Naive thymus-derived CD4-positive, alpha-beta T cell (primary cell): ENCODE measurements at regions of chr19 and their contacts with region 1.

Region 1: DNA sequence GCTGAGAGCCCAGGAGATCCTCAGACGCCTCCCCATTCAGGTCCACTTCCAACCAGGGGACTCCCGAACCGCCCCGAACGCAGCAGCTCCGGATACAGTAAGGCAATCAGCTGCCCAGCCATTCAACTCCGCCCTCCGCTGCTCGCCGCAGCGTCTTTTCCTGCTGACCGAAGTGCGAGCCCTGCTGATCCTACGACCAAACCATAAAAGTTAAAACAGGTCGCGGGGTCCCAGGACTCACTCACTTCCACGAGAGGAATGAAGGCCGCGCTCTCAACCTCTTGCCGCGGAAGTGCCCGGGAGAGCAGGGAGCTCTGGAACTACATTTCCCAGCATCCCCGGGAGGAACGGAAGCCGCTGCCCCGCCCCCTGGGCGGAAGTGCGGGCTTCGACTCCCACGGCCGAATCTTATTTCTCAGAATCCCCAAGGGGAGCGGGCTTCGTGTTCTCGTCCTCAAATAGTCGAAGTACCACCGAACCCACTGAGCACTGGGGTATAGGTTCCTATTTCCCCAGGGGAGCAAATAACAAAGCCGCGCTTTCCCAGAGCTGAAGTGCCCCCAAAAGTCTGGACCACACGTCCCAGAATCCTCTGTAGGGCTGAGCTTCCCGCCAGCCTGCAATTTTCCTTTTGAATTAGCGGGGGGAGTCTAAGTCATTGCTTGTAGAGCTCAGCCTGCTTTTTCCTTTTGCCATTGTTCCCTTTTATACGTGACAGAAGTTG is at the start of gene ZNF45:
- DNase-seq: peak; percentile 65 to 89 (median 86)
- ATAC-seq: peak; percentile 98
- H3K4me3 ChIP-seq: peak within 1 kb of the TSS; percentile 84
- H3K4me3 Mint-ChIP-seq: peak within 1 kb of the TSS; percentile 93 to 98 (median 96)
- H3K27ac ChIP-seq: peak within 1 kb of the TSS; percentile 81
- H3K27ac Mint-ChIP-seq: peak within 1 kb of the TSS; percentile 81 to 96 (median 93)
- H3K4me1 ChIP-seq: peaks cover 16 to 17% of the 10 kb centered on the region in 2 donors
- H3K4me1 Mint-ChIP-seq: peaks cover 10 to 46% (median 32%) of the 10 kb centered on the region in 7 donors
- H3K27me3 ChIP-seq: no peaks in the 10 kb centered on the region
- H3K27me3 Mint-ChIP-seq: peaks cover 0 to 7% (median 0%) of the 10 kb centered on the region in 5 donors
- total RNA-seq, gene ZNF45: 8.4 to 28.5 (median 15.3) TPM

Region 2: GRCh38 chr19:43901395-43902390 is 33.5 kb before region 1 on chr19:
- CTCF ChIA-PET with region 1: no interaction called
- POLR2A ChIA-PET with region 1: interaction called, 4 read pairs
- intact Hi-C with region 1: loop called (anchors 1 kb)
- DNase-seq: peak; percentile 21 to 56 (median 48)
- ATAC-seq: peak; percentile 87
- H3K4me3 ChIP-seq: peak overlapping the region; percentile 63
- H3K4me3 Mint-ChIP-seq: peak overlapping the region; percentile 89 to 97 (median 92)
- H3K27ac ChIP-seq: peak overlapping the region; percentile 27
- H3K27ac Mint-ChIP-seq: peak overlapping the region; percentile 66 to 86 (median 79)
- H3K4me1 ChIP-seq: peaks cover 0 to 7% of the 10 kb centered on the region in 2 donors
- H3K4me1 Mint-ChIP-seq: peaks cover 15 to 29% (median 21%) of the 10 kb centered on the region in 7 donors
- H3K27me3 ChIP-seq: no peaks in the 10 kb centered on the region
- H3K27me3 Mint-ChIP-seq: no peaks in the 10 kb centered on the region

Region 3: DNA sequence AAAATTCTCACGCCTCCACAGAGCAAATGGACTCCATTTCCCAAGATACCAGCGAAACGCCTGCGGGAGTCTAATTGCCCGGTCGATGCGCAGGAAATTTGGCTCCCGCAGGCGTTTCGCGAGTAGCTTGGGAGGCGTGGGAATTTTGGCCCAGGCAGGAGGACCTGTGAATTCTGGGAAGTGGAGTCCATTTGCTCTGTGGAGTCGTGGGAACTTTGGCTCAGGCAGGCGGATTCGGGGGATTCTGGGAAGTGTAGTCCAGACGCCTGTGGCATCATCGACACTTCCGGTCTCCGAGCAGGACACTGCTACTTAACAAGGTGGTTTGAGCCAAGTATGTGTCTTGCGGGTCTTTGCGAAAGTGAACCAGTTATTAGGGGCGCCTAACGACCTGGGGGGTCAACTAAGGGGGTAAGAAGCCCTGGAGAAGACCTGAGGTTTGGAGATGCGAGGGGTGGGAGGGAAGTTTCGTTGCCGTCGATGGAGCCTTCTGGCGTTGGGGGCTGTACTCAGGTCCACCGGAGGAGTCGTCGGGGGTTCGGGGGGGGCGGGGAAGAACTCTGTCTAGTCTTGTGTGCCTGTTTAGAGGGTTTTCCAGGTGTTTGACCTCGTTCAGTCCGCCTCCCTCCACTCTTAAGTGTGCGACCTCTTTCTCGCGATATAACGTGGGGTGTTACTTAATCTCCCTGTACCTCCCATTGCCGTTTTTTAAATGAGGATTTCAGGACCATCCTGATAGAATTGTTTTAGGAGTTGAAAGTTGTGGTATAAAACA is 49.0 kb after region 1 on chr19 and contains the start of gene ZNF155:
- CTCF ChIA-PET with region 1: interaction called, 4 read pairs
- POLR2A ChIA-PET with region 1: no interaction called
- intact Hi-C with region 1: loop called (anchors 1 kb)
- DNase-seq: peak; percentile 46 to 72 (median 64)
- ATAC-seq: peak; percentile 92
- H3K4me3 ChIP-seq: peak within 1 kb of the TSS; percentile 96
- H3K4me3 Mint-ChIP-seq: peak within 1 kb of the TSS; percentile 89 to 99 (median 96)
- H3K27ac ChIP-seq: peak within 1 kb of the TSS; percentile 79
- H3K27ac Mint-ChIP-seq: peak within 1 kb of the TSS; percentile 72 to 97 (median 93)
- H3K4me1 ChIP-seq: peaks cover 0 to 3% of the 10 kb centered on the region in 2 donors
- H3K4me1 Mint-ChIP-seq: peaks cover 0 to 28% (median 14%) of the 10 kb centered on the region in 7 donors
- H3K27me3 ChIP-seq: no peaks in the 10 kb centered on the region
- H3K27me3 Mint-ChIP-seq: no peaks in the 10 kb centered on the region
- total RNA-seq, gene ZNF155: 5.2 to 13.3 (median 9.1) TPM

Region 4: DNA sequence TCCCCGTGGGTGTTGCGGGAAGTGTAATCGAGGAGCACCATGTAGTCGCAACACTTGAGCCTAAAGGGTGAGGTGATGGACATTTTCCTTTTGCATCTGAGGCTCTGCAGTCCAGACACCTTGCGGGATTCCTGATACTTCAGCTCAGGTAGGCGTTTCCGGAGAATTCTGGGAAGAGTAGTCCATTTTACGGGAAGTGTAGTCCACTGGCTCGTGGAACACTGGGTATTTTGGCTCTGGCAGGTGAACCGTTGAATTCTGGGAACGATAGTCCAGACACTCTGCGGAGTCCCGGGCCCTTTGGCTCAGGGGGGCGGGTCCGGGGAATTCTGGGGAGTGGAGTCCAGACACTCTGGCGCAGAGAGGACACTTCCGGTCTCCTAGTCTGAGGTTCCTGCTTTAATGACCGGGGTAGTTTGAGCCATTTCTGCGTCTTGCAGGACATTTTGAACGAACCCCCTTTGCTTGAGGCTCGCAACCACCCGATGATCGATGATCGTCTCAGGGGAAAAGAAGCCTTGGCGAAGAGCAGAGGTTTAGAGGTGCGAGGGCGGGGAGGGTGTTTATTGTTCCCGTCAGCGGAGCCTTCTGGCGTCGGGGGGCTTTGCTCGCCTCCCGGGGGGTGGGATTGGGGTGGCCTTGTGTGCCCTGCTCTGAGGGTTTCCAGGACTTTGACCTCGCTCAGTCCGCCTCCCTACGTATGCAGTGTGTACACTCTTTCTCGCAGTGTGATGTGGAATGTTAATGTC is 116.7 kb after region 1 on chr19 and contains the start of gene ZNF223:
- CTCF ChIA-PET with region 1: no interaction called
- POLR2A ChIA-PET with region 1: interaction called, 3 read pairs
- intact Hi-C with region 1: loop called in 1 of 2 experiments (anchors 1 kb)
- DNase-seq: peak in 8 of 9 donors; percentile 14 to 52 (median 40)
- ATAC-seq: peak; percentile 85
- H3K4me3 ChIP-seq: peak within 1 kb of the TSS; percentile 58
- H3K4me3 Mint-ChIP-seq: peak within 1 kb of the TSS; percentile 71 to 98 (median 96)
- H3K27ac ChIP-seq: peak within 1 kb of the TSS; percentile 53
- H3K27ac Mint-ChIP-seq: peak within 1 kb of the TSS in 8 of 9 donors; percentile 36 to 91 (median 82)
- H3K4me1 ChIP-seq: no peaks in the 10 kb centered on the region
- H3K4me1 Mint-ChIP-seq: peaks cover 7 to 36% (median 28%) of the 10 kb centered on the region in 7 donors
- H3K27me3 ChIP-seq: no peaks in the 10 kb centered on the region
- H3K27me3 Mint-ChIP-seq: peaks cover 0 to 22% (median 13%) of the 10 kb centered on the region in 5 donors
- total RNA-seq, gene ZNF223: 0.15 to 8.7 (median 2.3) TPM

Region 5: GRCh38 chr19:44107751-44108150 is 172.6 kb after region 1 on chr19:
- CTCF ChIA-PET with region 1: no interaction called
- POLR2A ChIA-PET with region 1: no interaction called
- intact Hi-C with region 1: no loop called
- DNase-seq: no peak
- ATAC-seq: no peak
- H3K4me3 ChIP-seq: no peak overlapping the region
- H3K4me3 Mint-ChIP-seq: no peak overlapping the region
- H3K27ac ChIP-seq: no peak overlapping the region
- H3K27ac Mint-ChIP-seq: no peak overlapping the region
- H3K4me1 ChIP-seq: peaks cover 0 to 7% of the 10 kb centered on the region in 2 donors
- H3K4me1 Mint-ChIP-seq: peaks cover 3 to 12% (median 8%) of the 10 kb centered on the region in 7 donors
- H3K27me3 ChIP-seq: no peaks in the 10 kb centered on the region
- H3K27me3 Mint-ChIP-seq: no peaks in the 10 kb centered on the region

Region 6: DNA sequence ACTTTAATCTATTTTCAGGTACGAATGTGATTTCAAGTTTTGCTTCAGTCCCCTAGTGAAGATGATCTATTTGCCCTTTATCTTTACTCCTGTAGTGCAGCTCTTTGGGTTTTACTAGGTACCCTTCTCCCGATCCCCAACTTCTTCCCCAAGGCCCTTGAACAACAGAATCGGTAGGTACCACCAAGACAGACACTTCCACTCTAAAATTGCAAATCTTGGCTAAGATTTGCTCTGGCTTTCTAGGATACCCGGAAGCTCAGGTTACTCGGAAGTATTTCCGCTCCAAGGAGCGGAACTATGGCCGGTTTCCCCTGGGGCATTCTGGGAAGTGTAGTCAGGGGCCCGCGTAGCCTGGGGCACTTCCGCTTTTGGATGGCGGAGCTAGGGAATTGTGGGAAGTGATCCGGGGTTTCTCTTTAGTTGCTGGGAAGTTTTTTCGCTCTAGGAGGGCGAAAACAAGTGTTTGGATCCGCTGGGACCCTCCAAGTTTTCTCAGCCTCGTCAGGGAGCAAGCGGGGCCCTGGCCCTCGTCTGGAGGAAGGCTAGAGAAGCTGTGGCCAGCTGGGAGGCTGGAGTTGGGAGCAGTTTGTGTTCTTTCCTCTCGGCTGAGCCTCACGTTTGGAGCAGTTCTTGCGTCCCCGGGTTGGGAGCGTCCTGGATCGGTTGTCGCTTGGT is 272.1 kb after region 1 on chr19:
- CTCF ChIA-PET with region 1: no interaction called
- POLR2A ChIA-PET with region 1: no interaction called
- intact Hi-C with region 1: loop called (anchors 1 to 5 kb)
- DNase-seq: peak; percentile 25 to 78 (median 70)
- ATAC-seq: peak; percentile 97
- H3K4me3 ChIP-seq: peak overlapping the region; percentile 79
- H3K4me3 Mint-ChIP-seq: peak overlapping the region; percentile 81 to 95 (median 87)
- H3K27ac ChIP-seq: peak overlapping the region; percentile 75
- H3K27ac Mint-ChIP-seq: peak overlapping the region; percentile 79 to 93 (median 84)
- H3K4me1 ChIP-seq: peaks cover 0 to 11% of the 10 kb centered on the region in 2 donors
- H3K4me1 Mint-ChIP-seq: peaks cover 7 to 15% (median 11%) of the 10 kb centered on the region in 7 donors
- H3K27me3 ChIP-seq: no peaks in the 10 kb centered on the region
- H3K27me3 Mint-ChIP-seq: peaks cover 0 to 22% (median 16%) of the 10 kb centered on the region in 5 donors